ENCODE measurements at regions of chr18 and their contacts with region 1.

Region 1: GRCh38 chr18:48928787-48929186 is 22.0 kb downstream of the SMAD7 start:
- DNase-seq: peak; percentile 65
- ATAC-seq: peak; percentile 86
- H3K4me3 Mint-ChIP-seq: peak overlapping the region; percentile 80
- H3K27ac Mint-ChIP-seq: peak overlapping the region; percentile 92
- H3K4me1 Mint-ChIP-seq: peaks cover 97% of the 10 kb centered on the region
- H3K27me3 Mint-ChIP-seq: no peaks in the 10 kb centered on the region
- CTCF ChIP-seq: no peak

Region 2: GRCh38 chr18:48749768-48750167 is 179.0 kb before region 1 on chr18:
- CTCF ChIA-PET with region 1: no interaction called
- POLR2A ChIA-PET with region 1: no interaction called
- intact Hi-C with region 1: no loop called
- DNase-seq: no peak
- ATAC-seq: no peak
- H3K4me3 Mint-ChIP-seq: no peak overlapping the region
- H3K27ac Mint-ChIP-seq: no peak overlapping the region
- H3K4me1 Mint-ChIP-seq: peaks cover under 1% of the 10 kb centered on the region
- H3K27me3 Mint-ChIP-seq: no peaks in the 10 kb centered on the region
- CTCF ChIP-seq: no peak

Region 3: GRCh38 chr18:48785091-48785614 is 143.6 kb before region 1 on chr18:
- CTCF ChIA-PET with region 1: no interaction called
- POLR2A ChIA-PET with region 1: interaction called, 18 read pairs
- intact Hi-C with region 1: loop called (anchors 1 kb)
- DNase-seq: peak; percentile 47
- ATAC-seq: peak; percentile 91
- H3K4me3 Mint-ChIP-seq: peak overlapping the region; percentile 64
- H3K27ac Mint-ChIP-seq: peak overlapping the region; percentile 84
- H3K4me1 Mint-ChIP-seq: peaks cover 62% of the 10 kb centered on the region
- H3K27me3 Mint-ChIP-seq: no peaks in the 10 kb centered on the region
- CTCF ChIP-seq: no peak

Region 4: GRCh38 chr18:48834413-48835031 is 94.3 kb before region 1 on chr18:
- CTCF ChIA-PET with region 1: no interaction called
- POLR2A ChIA-PET with region 1: interaction called, 5 read pairs
- intact Hi-C with region 1: loop called (anchors 2 kb)
- DNase-seq: peak; percentile 42
- ATAC-seq: peak; percentile 83
- H3K4me3 Mint-ChIP-seq: peak overlapping the region; percentile 76
- H3K27ac Mint-ChIP-seq: peak overlapping the region; percentile 80
- H3K4me1 Mint-ChIP-seq: peaks cover 37% of the 10 kb centered on the region
- H3K27me3 Mint-ChIP-seq: no peaks in the 10 kb centered on the region
- CTCF ChIP-seq: no peak

Region 5: GRCh38 chr18:48896690-48897511 is 31.9 kb before region 1 on chr18:
- CTCF ChIA-PET with region 1: no interaction called
- POLR2A ChIA-PET with region 1: no interaction called
- intact Hi-C with region 1: loop called (anchors 2 kb)
- DNase-seq: peak; percentile 24
- ATAC-seq: peak; percentile 83
- H3K4me3 Mint-ChIP-seq: no peak overlapping the region
- H3K27ac Mint-ChIP-seq: no peak overlapping the region
- H3K4me1 Mint-ChIP-seq: peaks cover 17% of the 10 kb centered on the region
- H3K27me3 Mint-ChIP-seq: no peaks in the 10 kb centered on the region
- CTCF ChIP-seq: no peak

Region 6: GRCh38 chr18:48975649-48976204 is 46.9 kb after region 1 on chr18:
- CTCF ChIA-PET with region 1: no interaction called
- POLR2A ChIA-PET with region 1: interaction called, 3 read pairs
- intact Hi-C with region 1: loop called (anchors 2 kb)
- DNase-seq: peak; percentile 44
- ATAC-seq: peak; percentile 78
- H3K4me3 Mint-ChIP-seq: peak overlapping the region; percentile 38
- H3K27ac Mint-ChIP-seq: no peak overlapping the region
- H3K4me1 Mint-ChIP-seq: peaks cover 14% of the 10 kb centered on the region
- H3K27me3 Mint-ChIP-seq: peaks cover 16% of the 10 kb centered on the region
- CTCF ChIP-seq: no peak

Region 7: DNA sequence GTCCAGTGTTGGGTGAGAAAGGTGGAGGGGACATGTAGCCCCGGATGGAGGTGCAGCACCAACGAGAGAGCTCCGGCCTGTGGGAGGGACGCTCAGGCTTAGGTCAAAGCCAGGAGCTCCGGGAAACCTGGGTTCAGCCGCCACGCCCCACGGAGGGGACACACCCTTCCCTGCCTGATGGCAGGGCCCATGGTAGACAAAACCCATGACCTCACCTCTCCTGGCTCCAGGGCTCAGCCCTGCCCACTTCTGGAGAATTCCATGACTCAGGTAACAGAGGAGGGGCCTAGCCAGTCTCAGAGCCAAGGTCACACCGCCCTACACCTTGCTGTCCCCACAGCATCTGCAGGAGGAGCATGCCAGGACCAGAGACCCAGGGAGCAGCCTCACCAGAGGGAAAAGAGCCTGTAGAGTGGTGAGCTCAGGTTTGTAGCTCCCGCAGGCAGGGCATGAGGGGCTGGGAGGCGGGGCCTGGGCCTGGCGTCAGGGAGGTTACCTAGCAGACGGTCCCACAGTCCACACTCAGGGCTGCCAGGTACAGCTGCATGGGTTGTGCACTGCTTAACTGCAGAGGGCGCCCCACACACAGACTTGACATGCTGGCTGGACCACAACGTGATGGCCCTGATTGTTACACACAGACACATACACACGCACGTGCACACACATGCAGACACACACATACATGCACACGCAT is 92.8 kb after region 1 on chr18:
- CTCF ChIA-PET with region 1: no interaction called
- POLR2A ChIA-PET with region 1: no interaction called
- intact Hi-C with region 1: no loop called
- DNase-seq: no peak
- ATAC-seq: no peak
- H3K4me3 Mint-ChIP-seq: no peak overlapping the region
- H3K27ac Mint-ChIP-seq: no peak overlapping the region
- H3K4me1 Mint-ChIP-seq: peaks cover 51% of the 10 kb centered on the region
- H3K27me3 Mint-ChIP-seq: no peaks in the 10 kb centered on the region
- CTCF ChIP-seq: no peak

Region 8: GRCh38 chr18:49178736-49179135 is 249.9 kb after region 1 on chr18:
- CTCF ChIA-PET with region 1: no interaction called
- POLR2A ChIA-PET with region 1: no interaction called
- intact Hi-C with region 1: loop called (anchors 10 kb)
- DNase-seq: no peak
- ATAC-seq: no peak
- H3K4me3 Mint-ChIP-seq: no peak overlapping the region
- H3K27ac Mint-ChIP-seq: no peak overlapping the region
- H3K4me1 Mint-ChIP-seq: peaks cover 30% of the 10 kb centered on the region
- H3K27me3 Mint-ChIP-seq: no peaks in the 10 kb centered on the region
- CTCF ChIP-seq: no peak